ENCODE measurements at regions of chr14 and their contacts with region 1.

Region 1: GRCh38 chr14:100375963-100376735 is 53.0 kb downstream of the SLC25A47 start:
- DNase-seq: peak; percentile 94 to 96
- ATAC-seq: peak; percentile 90

Region 2: GRCh38 chr14:100306420-100307219 is 69.5 kb before region 1 on chr14 and contains the start of gene SLC25A29:
- intact Hi-C with region 1: loop called in 1 of 2 experiments (anchors 5 kb)
- DNase-seq: peak; percentile 81 to 90
- ATAC-seq: peak; percentile 86
- total RNA-seq, gene SLC25A29: 21.9 to 27.8 TPM